ENCODE measurements at regions of chr2 and their contacts with region 1.

Region 1: DNA sequence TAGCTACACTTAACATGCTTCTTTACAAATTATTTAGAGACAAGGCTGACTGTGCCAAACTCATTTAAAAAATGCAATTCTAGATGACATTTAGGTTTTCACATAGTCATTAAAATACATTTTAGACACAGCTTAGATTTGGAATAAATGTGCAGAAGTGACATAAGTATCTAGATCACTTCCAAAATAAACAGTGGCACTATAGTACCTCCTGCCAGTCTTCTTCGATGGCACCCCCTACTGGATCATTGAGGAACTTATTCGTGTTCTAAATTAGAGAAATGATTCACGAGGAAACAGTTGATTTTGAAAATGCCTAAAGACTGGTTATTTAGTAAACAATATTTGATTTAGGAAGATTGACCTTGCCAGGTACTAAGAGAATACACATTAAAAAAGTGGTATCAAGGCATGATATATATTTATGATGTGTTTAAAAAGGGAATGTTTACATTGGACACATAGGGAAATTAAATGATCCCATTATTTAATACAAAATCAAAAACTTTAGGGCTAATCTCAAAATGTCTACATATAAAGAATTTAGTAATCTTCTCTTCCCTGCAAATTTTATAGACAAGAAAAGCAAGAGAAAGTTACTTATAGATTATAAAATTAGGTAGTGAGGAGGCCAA is 323.9 kb downstream of the XIRP2 start:
- DNase-seq: peak in 1 of 2 donors; percentile 39
- ATAC-seq: peak; percentile 70 to 73
- H3K4me3 ChIP-seq: no peak overlapping the region
- H3K27ac ChIP-seq: peak overlapping the region; percentile 72 to 86 (median 80)
- H3K4me1 ChIP-seq: peaks cover 19 to 27% of the 10 kb centered on the region in 2 donors
- H3K27me3 ChIP-seq: no peaks in the 10 kb centered on the region
- CTCF ChIP-seq: peak; percentile 70 to 81 (median 75)
- POLR2A ChIP-seq: no peak

Region 2: DNA sequence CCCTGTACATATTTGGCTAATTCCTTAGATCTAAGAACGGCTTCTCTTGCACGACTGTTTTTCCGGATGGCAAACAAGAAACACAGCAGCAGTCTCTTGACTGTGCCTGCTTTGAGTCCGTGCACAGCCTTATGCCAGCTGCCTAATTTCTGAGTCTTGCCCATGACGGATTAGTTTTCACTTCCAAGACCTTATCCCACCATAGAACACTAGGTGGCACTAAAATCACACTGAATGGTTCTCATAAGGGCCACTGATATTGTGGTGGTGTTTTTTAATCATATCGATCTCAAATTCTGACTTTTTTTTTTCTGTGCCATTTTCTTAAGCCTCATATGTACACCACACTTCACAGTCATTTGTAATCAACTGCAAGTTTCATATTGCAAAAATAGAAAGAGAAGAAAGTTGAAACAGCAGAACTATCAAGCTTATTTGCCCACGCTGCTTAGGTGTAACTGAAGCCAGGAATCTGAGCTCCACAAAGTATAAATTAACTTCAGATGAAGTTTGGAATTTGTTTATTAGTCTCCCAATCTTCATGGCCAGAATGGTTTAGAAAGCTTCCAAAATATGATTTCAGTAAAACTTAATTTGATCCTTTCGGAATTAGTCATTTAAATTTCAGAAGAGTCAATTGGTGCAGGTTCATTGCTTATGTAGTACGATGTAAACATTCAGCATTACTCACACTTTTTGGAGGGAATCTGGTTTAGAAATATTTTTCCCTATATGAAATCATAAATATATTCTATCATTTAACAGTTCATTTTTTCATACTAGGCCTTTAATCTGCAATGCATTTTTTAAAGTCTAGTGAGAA is 672.6 kb before region 1 on chr2:
- in situ Hi-C with region 1: loop called in 1 of 4 experiments (anchors 10 kb)
- intact Hi-C with region 1: loop called (anchors 10 kb)
- DNase-seq: no peak
- ATAC-seq: peak; percentile 72 to 94
- H3K4me3 ChIP-seq: peak overlapping the region in 1 of 4 donors; percentile 28
- H3K27ac ChIP-seq: no peak overlapping the region
- H3K4me1 ChIP-seq: no peaks in the 10 kb centered on the region
- H3K27me3 ChIP-seq: no peaks in the 10 kb centered on the region
- CTCF ChIP-seq: peak; percentile 32 to 75 (median 65)
- POLR2A ChIP-seq: no peak

Region 3: GRCh38 chr2:166695154-166695553 is 517.0 kb before region 1 on chr2:
- in situ Hi-C with region 1: no loop called
- intact Hi-C with region 1: loop called (anchors 5 kb)
- DNase-seq: no peak
- ATAC-seq: no peak
- H3K4me3 ChIP-seq: no peak overlapping the region
- H3K27ac ChIP-seq: no peak overlapping the region
- H3K4me1 ChIP-seq: no peaks in the 10 kb centered on the region
- H3K27me3 ChIP-seq: no peaks in the 10 kb centered on the region
- CTCF ChIP-seq: no peak
- POLR2A ChIP-seq: no peak

Region 4: DNA sequence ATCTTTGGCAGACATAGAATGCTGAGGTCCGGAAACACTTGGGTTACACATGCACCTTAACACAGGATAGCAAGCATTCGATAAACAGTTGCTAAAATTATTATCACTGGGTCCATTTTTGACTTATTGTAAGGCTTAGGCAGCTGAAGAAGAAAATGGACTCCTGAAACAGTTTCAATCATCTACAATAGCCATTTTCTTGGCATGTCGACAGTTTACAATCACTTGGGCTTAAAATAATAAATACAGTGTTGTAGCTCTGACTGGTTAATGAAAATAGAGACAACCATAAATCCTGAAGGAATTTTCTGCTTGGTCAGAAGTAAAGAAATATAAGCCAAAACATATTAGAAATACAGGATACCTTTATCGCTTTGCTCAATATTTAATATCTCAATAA is 154.7 kb before region 1 on chr2:
- in situ Hi-C with region 1: no loop called
- intact Hi-C with region 1: loop called (anchors 5 kb)
- DNase-seq: no peak
- ATAC-seq: no peak
- H3K4me3 ChIP-seq: no peak overlapping the region
- H3K27ac ChIP-seq: no peak overlapping the region
- H3K4me1 ChIP-seq: no peaks in the 10 kb centered on the region
- H3K27me3 ChIP-seq: no peaks in the 10 kb centered on the region
- CTCF ChIP-seq: no peak
- POLR2A ChIP-seq: no peak

Region 5: DNA sequence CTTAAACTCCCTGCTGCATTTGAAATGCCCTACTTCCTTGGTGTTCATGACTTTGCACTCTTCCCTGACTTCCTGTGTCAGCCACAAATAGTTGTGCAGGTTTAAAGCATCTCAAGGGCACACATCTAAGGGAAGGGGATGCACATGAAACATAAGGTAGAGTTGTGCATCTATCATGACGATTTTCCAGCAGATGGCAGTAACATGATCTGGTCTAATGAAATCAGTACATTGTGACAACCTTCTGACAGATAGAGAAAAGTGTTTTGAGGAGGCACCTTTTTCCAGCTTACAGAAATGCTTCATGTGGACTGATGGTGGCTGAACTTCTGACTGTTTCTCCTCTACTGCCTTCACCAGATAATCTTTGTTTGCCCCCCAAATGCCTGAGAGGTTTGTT is 85.0 kb before region 1 on chr2:
- in situ Hi-C with region 1: loop called in 1 of 4 experiments (anchors 10 kb)
- intact Hi-C with region 1: no loop called
- DNase-seq: no peak
- ATAC-seq: peak; percentile 64 to 67
- H3K4me3 ChIP-seq: no peak overlapping the region
- H3K27ac ChIP-seq: no peak overlapping the region
- H3K4me1 ChIP-seq: peaks cover 0 to 11% of the 10 kb centered on the region in 2 donors
- H3K27me3 ChIP-seq: no peaks in the 10 kb centered on the region
- CTCF ChIP-seq: peak in 2 of 5 experiments; percentile 8 to 27
- POLR2A ChIP-seq: no peak

Region 6: DNA sequence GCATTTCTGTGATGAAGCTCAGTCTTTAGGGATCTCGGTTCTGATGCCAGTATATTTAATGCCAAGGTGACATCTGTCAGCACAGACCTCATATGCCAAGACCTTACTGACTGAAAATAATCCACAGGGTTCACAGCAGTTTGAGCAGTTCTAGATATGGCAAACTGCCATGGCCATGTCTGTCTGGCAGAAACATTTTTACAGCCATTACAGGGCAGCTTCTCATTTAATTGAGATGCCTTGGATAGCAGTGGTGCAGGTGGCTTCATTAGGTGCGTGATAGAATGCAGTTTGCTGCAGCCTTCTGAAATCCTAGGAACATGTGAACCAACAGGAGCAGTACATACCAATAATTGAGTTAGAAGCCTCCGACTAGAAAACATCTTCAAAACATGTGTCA is 186.7 kb after region 1 on chr2:
- in situ Hi-C with region 1: no loop called
- intact Hi-C with region 1: no loop called
- DNase-seq: no peak
- ATAC-seq: no peak
- H3K4me3 ChIP-seq: no peak overlapping the region
- H3K27ac ChIP-seq: no peak overlapping the region
- H3K4me1 ChIP-seq: peaks cover 0 to 7% of the 10 kb centered on the region in 2 donors
- H3K27me3 ChIP-seq: no peaks in the 10 kb centered on the region
- CTCF ChIP-seq: no peak
- POLR2A ChIP-seq: no peak

Measured in gastrocnemius medialis (tissue), 4 donors.